Prostate gland (tissue), 2 donors: ENCODE measurements at regions of chr6 and their contacts with region 1.

Region 1: GRCh38 chr6:87154993-87155841 is at the start of gene ZNF292:
- DNase-seq: peak; percentile 96
- H3K4me3 ChIP-seq: peak within 1 kb of the TSS; percentile 86 to 98
- H3K27ac ChIP-seq: peak within 1 kb of the TSS; percentile 95 to 96
- H3K4me1 ChIP-seq: peaks cover 6% of the 10 kb centered on the region
- H3K27me3 ChIP-seq: no peaks in the 10 kb centered on the region
- CTCF ChIP-seq: peak in 2 of 4 experiments; percentile 15 to 24
- POLR2A ChIP-seq: peak; percentile 84
- total RNA-seq, gene ZNF292: 28.0 to 49.0 TPM

Region 2: GRCh38 chr6:87197547-87197946 is 42.3 kb after region 1 on chr6:
- intact Hi-C with region 1: no loop called
- DNase-seq: no peak
- H3K4me3 ChIP-seq: no peak overlapping the region
- H3K27ac ChIP-seq: no peak overlapping the region
- H3K4me1 ChIP-seq: no peaks in the 10 kb centered on the region
- H3K27me3 ChIP-seq: no peaks in the 10 kb centered on the region
- CTCF ChIP-seq: no peak
- POLR2A ChIP-seq: no peak

Region 3: DNA sequence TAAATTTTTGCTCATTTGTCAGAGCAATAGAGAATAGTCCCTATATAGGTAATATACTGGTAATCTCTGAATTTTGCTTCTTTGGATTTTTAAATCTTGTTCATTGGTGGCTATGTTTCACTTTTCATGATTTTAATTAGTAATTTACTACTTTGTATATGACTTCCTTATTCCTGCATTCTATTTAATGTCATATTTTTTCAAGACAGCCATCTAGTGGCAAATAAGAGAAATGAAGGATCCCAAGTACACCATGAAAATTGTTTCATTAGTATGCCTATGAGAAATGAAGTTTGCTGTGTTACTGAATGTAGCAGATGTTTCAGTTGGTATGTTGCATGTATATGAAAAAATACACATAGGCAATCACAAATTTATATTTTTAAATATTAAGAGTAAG is 82.6 kb after region 1 on chr6:
- intact Hi-C with region 1: loop called (anchors 5 kb)
- DNase-seq: no peak
- H3K4me3 ChIP-seq: no peak overlapping the region
- H3K27ac ChIP-seq: no peak overlapping the region
- H3K4me1 ChIP-seq: no peaks in the 10 kb centered on the region
- H3K27me3 ChIP-seq: no peaks in the 10 kb centered on the region
- CTCF ChIP-seq: peak in 3 of 4 experiments; percentile 29 to 51 (median 42)
- POLR2A ChIP-seq: no peak

Region 4: GRCh38 chr6:87308970-87309369 is 153.8 kb after region 1 on chr6:
- intact Hi-C with region 1: no loop called
- DNase-seq: no peak
- H3K4me3 ChIP-seq: no peak overlapping the region
- H3K27ac ChIP-seq: no peak overlapping the region
- H3K4me1 ChIP-seq: no peaks in the 10 kb centered on the region
- H3K27me3 ChIP-seq: no peaks in the 10 kb centered on the region
- CTCF ChIP-seq: no peak
- POLR2A ChIP-seq: no peak

Region 5: GRCh38 chr6:87397656-87398055 is 242.4 kb after region 1 on chr6:
- intact Hi-C with region 1: no loop called
- DNase-seq: no peak
- H3K4me3 ChIP-seq: no peak overlapping the region
- H3K27ac ChIP-seq: no peak overlapping the region
- H3K4me1 ChIP-seq: no peaks in the 10 kb centered on the region
- H3K27me3 ChIP-seq: no peaks in the 10 kb centered on the region
- CTCF ChIP-seq: no peak
- POLR2A ChIP-seq: no peak

Region 6: DNA sequence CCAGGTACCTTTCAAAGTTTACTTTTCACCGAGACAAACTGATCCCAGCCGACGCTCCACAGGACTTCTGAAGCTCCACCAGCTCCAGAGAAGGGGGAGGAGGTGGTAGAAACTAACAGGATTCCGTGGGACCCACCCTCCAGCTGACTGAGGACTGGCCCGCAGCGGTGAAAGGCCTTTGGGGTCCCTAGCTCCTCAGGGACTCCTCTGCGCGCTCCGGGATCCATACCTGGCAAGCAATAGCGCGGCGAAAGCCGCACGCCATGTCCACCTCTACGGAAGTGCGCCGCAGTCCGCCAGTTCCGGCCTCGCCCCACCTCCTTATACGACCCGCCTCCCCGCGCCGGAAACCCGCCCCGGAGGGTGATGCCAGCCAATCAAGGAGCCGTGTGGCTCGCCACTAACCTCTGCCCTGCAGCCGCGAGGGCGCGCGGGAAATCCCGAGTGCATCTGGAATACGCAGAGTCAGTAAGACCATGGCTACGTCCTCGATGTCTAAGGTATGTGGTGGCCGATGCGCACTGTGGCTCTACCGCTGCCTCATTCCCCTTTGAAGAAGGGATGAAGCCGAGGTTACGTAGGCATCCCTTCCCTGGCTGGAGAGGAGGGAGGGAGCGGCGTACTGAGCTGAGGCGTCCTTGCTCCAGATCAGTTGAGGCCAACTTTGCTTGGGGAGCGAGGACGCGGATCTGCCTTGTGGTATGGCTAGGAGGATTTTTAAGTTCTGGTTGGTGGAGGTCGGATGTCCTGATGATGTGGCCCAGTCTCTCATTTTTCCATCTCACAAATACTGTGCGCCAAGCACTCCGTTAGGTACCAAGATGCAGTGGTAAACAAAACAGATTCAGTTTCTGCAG is 434.7 kb after region 1 on chr6 and contains the starts of genes ORC3 and RARS2:
- intact Hi-C with region 1: loop called (anchors 5 kb)
- DNase-seq: peak; percentile 96
- H3K4me3 ChIP-seq: peak within 1 kb of the TSS; percentile 77 to 89
- H3K27ac ChIP-seq: peak within 1 kb of the TSS; percentile 71 to 88
- H3K4me1 ChIP-seq: peaks cover 17% of the 10 kb centered on the region
- H3K27me3 ChIP-seq: no peaks in the 10 kb centered on the region
- CTCF ChIP-seq: no peak
- POLR2A ChIP-seq: peak; percentile 78
- total RNA-seq, gene ORC3: 18.5 to 30.9 TPM
- total RNA-seq, gene RARS2: 27.4 to 29.5 TPM

Region 7: GRCh38 chr6:87701676-87702588 is 546.7 kb after region 1 on chr6 and contains the start of gene AKIRIN2:
- intact Hi-C with region 1: loop called (anchors 10 kb)
- DNase-seq: peak; percentile 97
- H3K4me3 ChIP-seq: peak within 1 kb of the TSS; percentile 95 to 99
- H3K27ac ChIP-seq: peak within 1 kb of the TSS; percentile 95
- H3K4me1 ChIP-seq: no peaks in the 10 kb centered on the region
- H3K27me3 ChIP-seq: no peaks in the 10 kb centered on the region
- CTCF ChIP-seq: peak in 1 of 4 experiments; percentile 11
- POLR2A ChIP-seq: peak; percentile 98
- total RNA-seq, gene AKIRIN2: 28.4 to 44.1 TPM